Thyroid gland (tissue), 4 donors: ENCODE measurements at regions of chr11 and their contacts with region 1.

Region 1: DNA sequence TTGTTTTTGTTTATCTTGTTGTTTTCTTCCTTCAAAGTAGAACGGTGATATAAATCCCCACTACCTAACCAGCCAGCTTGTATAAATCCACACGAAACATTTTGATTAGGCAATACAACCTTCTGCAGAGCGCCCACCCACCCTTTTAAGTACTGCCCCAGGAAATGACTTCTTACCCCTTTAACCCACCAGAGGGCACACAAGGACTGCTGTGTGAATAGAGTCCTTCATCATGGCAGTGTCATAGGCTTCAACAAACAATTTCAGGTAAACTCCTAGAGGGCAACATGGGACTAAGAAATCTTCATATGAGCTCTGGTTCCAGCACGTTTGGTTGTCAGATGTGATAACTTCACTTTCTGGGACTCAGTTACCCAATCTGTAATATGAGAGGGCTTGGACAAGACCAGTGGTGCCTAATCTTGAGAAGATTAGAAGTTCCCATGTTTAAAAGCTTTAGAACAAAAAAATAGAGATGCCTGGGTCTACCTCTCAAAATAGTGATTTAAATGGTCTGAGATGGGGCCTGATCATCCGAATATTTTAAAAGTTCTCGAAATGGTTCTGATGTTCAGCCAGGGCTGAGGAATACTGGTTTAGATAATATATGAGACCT is 56.1 kb downstream of the PIWIL4 start:
- DNase-seq: peak; percentile 47 to 57
- H3K4me3 ChIP-seq: no peak overlapping the region
- H3K27ac ChIP-seq: no peak overlapping the region
- H3K4me1 ChIP-seq: no peaks in the 10 kb centered on the region
- H3K27me3 ChIP-seq: no peaks in the 10 kb centered on the region
- CTCF ChIP-seq: peak; percentile 26 to 90 (median 74)
- POLR2A ChIP-seq: no peak

Region 2: GRCh38 chr11:94741022-94741679 is 117.9 kb after region 1 on chr11:
- intact Hi-C with region 1: loop called (anchors 10 kb)
- DNase-seq: peak; percentile 30 to 31
- H3K4me3 ChIP-seq: peak overlapping the region in 2 of 3 donors; percentile 16 to 35
- H3K27ac ChIP-seq: no peak overlapping the region
- H3K4me1 ChIP-seq: peaks cover 4 to 6% of the 10 kb centered on the region in 2 donors
- H3K27me3 ChIP-seq: no peaks in the 10 kb centered on the region
- CTCF ChIP-seq: peak in 4 of 6 experiments; percentile 37 to 56 (median 52)
- POLR2A ChIP-seq: no peak

Region 3: GRCh38 chr11:94897330-94897768 is 274.1 kb after region 1 on chr11:
- intact Hi-C with region 1: loop called (anchors 5 kb)
- DNase-seq: peak; percentile 56
- H3K4me3 ChIP-seq: no peak overlapping the region
- H3K27ac ChIP-seq: no peak overlapping the region
- H3K4me1 ChIP-seq: no peaks in the 10 kb centered on the region
- H3K27me3 ChIP-seq: no peaks in the 10 kb centered on the region
- CTCF ChIP-seq: peak; percentile 53 to 86 (median 72)
- POLR2A ChIP-seq: no peak